ENCODE measurements at regions of chr5 and their contacts with region 1.

Region 1: DNA sequence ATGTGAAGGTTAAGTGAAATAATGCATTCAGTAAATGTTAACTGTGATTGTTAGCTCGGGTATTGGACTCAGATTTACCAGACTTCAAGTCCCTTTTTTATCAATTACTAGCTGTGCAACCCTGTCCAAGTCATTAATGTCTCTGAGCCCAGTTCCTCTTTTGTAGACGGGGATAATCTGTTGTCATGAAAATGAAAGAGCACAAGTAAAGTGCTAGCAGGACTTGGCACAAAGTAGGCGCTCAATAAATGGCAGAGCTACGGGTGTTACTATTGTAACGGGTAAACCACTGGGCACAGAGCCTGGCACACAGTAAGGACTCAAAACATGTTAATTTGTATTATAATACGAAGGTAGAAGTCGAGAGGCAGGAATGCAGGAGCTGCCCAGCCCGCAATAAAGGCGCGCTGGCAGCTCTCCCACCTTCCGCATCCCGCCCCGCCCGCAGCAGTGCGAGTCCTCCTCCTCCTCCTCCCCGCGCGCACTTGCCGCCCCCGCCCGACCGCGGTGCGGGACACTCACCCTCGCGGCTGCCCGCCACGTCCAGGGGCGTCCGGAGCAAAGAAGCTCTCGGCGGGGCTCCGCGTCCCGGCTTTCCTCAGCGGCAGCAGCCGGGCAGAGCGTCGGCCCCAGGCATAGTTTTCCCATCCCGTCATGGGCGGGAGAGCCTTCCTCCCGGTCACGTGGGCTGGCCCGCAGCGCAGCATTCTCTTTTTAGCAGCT is at the start of gene C1QTNF2:
- DNase-seq: no peak
- ATAC-seq: peak; percentile 83
- H3K4me3 ChIP-seq: peak within 1 kb of the TSS; percentile 47 to 51
- H3K27ac ChIP-seq: no peak within 1 kb of the TSS
- H3K4me1 ChIP-seq: no peaks in the 10 kb centered on the region; the same call in 1 of the 2 replicates
- H3K27me3 ChIP-seq: peaks cover 24% of the 10 kb centered on the region
- CTCF ChIP-seq: no peak
- total RNA-seq, gene C1QTNF2: 0.44 TPM

Region 2: GRCh38 chr5:160174780-160175437 is 195.2 kb before region 1 on chr5:
- CTCF ChIA-PET with region 1: interaction called, 13 read pairs
- POLR2A ChIA-PET with region 1: no interaction called
- in situ Hi-C with region 1: no loop called
- intact Hi-C with region 1: no loop called
- DNase-seq: no peak
- ATAC-seq: no peak
- H3K4me3 ChIP-seq: no peak overlapping the region
- H3K27ac ChIP-seq: no peak overlapping the region
- H3K4me1 ChIP-seq: no peaks in the 10 kb centered on the region
- H3K27me3 ChIP-seq: no peaks in the 10 kb centered on the region
- CTCF ChIP-seq: no peak